Activated CD4-positive, alpha-beta T cell treated with anti-CD3 and anti-CD28 coated beads for 36 hours (primary cell): ENCODE measurements at regions of chr9 and their contacts with region 1.

Region 1: DNA sequence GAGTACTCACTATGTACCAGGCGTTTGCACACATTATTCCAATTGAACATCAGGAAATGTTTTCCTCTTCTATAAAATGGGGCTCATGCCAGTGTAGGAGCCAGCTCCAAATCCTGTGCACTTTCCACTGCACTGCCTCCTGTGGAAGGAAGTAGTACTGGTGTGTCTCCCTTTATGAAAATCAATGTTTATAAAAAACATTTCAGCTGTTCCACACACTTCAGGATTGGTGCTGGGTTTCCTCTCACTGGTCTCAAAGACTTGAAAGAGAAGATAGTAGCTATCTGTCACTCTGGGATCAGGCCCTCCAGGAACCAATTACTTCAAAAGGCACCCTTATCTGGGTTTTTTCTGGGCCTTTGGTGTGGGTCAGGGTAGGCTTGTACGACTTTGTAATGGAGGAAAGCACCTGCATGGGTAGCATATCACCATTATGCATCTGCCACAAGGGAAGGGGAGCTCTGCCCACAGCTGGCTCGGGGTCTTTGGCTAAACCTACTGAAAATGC is 32.5 kb downstream of the RAB14 start:
- DNase-seq: peak; percentile 39
- ATAC-seq: peak; percentile 84
- H3K4me3 Mint-ChIP-seq: no peak overlapping the region
- H3K27ac Mint-ChIP-seq: peak overlapping the region; percentile 65
- H3K4me1 Mint-ChIP-seq: peaks cover 19% of the 10 kb centered on the region
- H3K27me3 Mint-ChIP-seq: no peaks in the 10 kb centered on the region

Region 2: GRCh38 chr9:119649205-119649604 is 1519.9 kb before region 1 on chr9:
- CTCF ChIA-PET with region 1: no interaction called
- POLR2A ChIA-PET with region 1: no interaction called
- intact Hi-C with region 1: no loop called
- DNase-seq: no peak
- ATAC-seq: no peak
- H3K4me3 Mint-ChIP-seq: no peak overlapping the region
- H3K27ac Mint-ChIP-seq: no peak overlapping the region
- H3K4me1 Mint-ChIP-seq: no peaks in the 10 kb centered on the region
- H3K27me3 Mint-ChIP-seq: peaks cover 2% of the 10 kb centered on the region

Region 3: GRCh38 chr9:121185178-121185745 is 16.1 kb after region 1 on chr9:
- CTCF ChIA-PET with region 1: interaction called, 10 read pairs
- POLR2A ChIA-PET with region 1: interaction called, 5 read pairs
- intact Hi-C with region 1: no loop called
- DNase-seq: no peak
- ATAC-seq: peak; percentile 69
- H3K4me3 Mint-ChIP-seq: no peak overlapping the region
- H3K27ac Mint-ChIP-seq: peak overlapping the region; percentile 73
- H3K4me1 Mint-ChIP-seq: peaks cover 61% of the 10 kb centered on the region
- H3K27me3 Mint-ChIP-seq: no peaks in the 10 kb centered on the region

Region 4: GRCh38 chr9:121196389-121196788 is 27.2 kb after region 1 on chr9:
- CTCF ChIA-PET with region 1: interaction called, 11 read pairs
- POLR2A ChIA-PET with region 1: no interaction called
- intact Hi-C with region 1: no loop called
- DNase-seq: no peak
- ATAC-seq: no peak
- H3K4me3 Mint-ChIP-seq: peak overlapping the region; percentile 19
- H3K27ac Mint-ChIP-seq: peak overlapping the region; percentile 25
- H3K4me1 Mint-ChIP-seq: peaks cover 76% of the 10 kb centered on the region
- H3K27me3 Mint-ChIP-seq: no peaks in the 10 kb centered on the region